Right ventricle myocardium inferior (tissue), 1 donor: ENCODE measurements at regions of chr16 and their contacts with region 1.

Region 1: GRCh38 chr16:69565671-69566239 is at the start of gene NFAT5:
- DNase-seq: peak; percentile 94
- ATAC-seq: peak; percentile 93
- total RNA-seq, gene NFAT5: 16.2 TPM

Region 2: DNA sequence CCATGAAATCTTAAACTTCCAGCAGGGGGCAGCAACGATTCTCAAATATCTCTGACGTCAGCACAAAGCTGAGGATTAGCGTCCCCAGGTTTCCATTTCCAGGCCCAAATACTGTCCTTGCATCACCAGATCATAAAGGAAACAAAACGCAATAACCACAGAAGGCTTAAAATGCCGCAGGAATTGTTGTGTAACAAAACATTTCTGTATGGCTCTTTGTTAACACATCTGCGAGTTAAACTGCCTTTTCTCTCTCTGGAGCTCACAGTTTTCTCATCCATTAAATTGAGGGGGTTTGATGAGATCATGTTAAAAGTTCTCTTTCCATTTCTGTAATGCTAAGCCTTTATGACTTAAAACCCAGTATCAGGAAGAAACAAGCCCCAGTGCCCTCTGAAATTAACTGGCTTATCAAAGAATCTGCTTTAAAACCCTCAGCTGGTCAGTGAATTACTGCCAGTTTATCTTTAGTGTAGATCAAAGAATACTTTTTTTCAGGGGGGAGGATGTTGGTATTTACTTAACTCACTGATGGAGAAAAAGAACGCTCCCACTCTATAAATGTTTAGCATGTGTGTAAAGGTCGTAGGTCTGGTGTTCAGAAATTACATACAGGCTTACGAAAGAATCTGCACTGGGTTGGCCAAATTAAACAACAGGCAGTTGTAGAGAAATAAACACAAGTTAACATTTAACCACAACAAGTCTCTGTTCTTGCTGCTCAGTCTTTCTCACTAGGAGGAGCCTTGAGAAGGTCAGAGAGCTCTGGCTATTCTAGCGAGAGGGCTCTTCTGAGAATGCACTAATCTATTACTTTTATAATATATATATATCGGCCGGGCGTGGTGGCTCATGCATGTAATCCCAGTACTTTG is 169.3 kb before region 1 on chr16:
- intact Hi-C with region 1: loop called (anchors 2 kb)
- DNase-seq: no peak
- ATAC-seq: peak; percentile 54

Region 3: DNA sequence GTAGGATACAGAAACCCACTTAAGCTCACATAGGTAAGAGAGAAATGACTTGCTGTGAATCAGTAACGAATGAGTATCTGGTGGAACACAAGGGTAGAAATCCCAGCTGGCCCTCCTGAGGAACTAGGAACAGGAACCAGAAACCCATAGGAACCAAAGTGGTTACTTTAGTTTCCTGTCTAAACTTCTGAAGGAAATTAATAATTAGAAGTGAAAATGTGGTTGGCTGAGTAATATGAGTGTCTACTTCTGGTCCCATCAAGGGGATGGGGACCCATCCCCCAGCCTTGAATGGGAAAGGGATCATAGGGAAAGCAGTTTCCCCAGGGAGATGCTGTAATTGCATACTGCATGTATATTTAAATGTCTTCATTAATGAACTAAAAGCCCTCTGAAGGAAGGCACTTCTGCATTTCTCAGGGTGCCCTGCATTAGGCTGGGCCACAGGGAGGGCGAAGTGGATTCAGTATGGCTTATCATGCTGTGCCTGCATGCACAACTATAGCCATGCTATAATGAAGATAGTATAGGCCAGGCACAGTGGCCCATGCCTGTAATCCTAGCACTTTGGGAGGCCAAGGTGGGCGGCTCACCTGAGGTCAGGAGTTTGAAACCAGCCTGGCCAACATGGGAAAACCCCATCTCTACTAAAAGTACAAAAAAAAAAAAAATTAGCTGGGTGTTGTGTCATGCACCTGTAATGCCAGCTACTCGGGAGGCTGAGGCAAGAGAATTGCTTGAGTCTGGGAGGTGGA is 95.8 kb before region 1 on chr16:
- intact Hi-C with region 1: no loop called
- DNase-seq: no peak
- ATAC-seq: no peak

Region 4: GRCh38 chr16:69482410-69482991 is 83.3 kb before region 1 on chr16:
- intact Hi-C with region 1: loop called (anchors 2 kb)
- DNase-seq: peak; percentile 77
- ATAC-seq: peak; percentile 84

Region 5: GRCh38 chr16:69494993-69495392 is 70.8 kb before region 1 on chr16:
- intact Hi-C with region 1: loop called (anchors 5 kb)
- DNase-seq: no peak
- ATAC-seq: no peak

Region 6: DNA sequence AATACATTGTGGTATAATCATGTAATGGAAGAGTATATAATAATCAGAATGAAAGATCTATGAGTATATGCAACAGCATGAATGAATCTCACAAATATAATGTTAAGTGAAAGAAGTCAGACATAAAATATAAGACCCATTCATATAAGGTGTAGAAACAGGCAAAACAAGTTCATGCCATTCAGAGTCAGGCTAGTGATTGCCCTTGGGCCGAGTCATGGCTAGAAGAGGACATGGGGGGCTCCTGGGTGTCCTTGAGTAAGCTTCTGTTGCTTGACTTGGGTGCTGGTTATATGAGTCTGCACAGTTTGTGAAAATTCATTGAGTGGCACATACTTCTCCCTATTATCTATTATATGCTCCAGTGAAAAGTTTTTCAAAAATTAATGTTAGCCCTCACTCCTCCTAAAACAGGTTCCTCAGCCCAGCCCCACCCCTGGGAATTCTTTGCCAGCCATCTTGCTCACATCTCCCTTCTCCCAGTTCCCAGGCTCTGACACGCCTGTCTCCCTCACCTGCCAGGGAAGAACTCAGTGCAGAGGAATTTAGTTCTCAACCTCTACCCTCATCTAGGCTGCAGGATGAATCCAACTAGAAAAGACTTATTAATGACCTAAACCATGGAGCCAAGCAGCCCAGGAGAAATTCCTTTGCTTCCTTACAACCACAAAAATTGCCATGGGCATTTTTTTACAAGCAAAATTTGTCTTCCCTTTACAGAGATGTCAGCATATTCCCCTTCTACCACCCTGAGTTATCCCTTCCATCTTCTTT is 52.4 kb before region 1 on chr16:
- intact Hi-C with region 1: no loop called
- DNase-seq: no peak
- ATAC-seq: no peak

Region 7: DNA sequence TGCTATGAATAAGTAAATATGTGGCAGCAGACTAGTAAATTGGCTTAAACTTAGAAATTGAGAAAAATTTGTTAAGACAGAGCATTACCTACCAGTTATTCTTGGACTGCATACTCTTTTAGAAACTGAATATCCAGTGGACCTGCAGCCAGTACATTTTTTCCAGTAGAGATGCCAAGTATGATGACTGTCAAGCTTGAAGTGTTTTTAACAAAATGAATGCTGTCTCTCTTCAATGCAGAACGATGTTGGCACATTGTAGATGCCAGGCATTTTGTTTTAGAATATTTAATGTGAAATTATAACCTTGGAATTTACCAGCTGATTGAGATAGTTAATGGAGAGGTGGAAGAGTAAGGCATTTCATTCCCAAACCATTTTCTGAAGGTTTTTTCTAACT is 52.6 kb after region 1 on chr16:
- intact Hi-C with region 1: loop called (anchors 5 kb)
- DNase-seq: no peak
- ATAC-seq: peak; percentile 51